Aorta (tissue), 5 donors: ENCODE measurements at regions of chr12 and their contacts with region 1.

Region 1: GRCh38 chr12:50314629-50315312 is 31.5 kb upstream of the LIMA1 start:
- DNase-seq: no peak
- ATAC-seq: no peak
- H3K4me3 ChIP-seq: no peak overlapping the region
- H3K27ac ChIP-seq: no peak overlapping the region
- H3K4me1 ChIP-seq: no peaks in the 10 kb centered on the region
- H3K27me3 ChIP-seq: no peaks in the 10 kb centered on the region

Region 2: DNA sequence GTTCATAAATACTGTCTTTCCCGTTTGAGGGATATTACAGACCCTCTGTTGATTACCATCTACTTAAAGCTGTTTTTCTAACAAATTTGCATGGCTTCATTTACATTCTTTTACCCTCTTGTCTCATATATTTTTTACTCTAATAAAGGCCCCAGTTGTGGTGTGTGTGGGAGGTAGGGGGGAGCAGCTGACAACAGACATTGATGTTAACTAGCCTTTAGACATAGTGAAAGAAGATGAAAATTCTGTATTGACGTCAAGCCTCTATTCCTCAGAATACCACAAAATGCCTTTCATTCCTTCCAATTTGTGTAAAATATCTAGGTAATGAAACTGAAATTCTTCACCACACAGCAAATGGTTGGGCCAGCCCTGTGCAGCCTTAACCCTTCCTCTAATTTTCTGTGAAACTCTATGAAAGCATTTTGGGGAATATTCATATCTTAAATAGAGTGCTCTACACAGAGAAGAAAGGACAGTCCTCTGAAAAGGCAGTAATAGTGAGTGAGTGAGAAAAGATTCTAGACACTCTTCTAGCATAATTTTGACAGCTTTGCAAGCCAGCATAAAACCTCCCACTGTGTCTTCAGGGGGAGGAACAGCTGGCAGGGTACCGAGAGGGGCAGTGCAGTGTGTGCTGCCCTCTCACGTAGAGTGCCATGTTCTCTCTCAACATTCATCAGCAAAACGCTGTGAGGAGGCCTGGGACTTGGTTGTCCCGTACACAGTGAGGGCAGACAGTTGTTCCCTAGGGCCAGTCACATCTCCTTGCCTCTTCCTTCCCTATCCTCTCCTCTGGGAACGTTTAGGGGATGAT is 127.5 kb before region 1 on chr12:
- intact Hi-C with region 1: loop called in 1 of 2 experiments (anchors 10 kb)
- DNase-seq: no peak
- ATAC-seq: peak; percentile 47
- H3K4me3 ChIP-seq: no peak overlapping the region
- H3K27ac ChIP-seq: peak overlapping the region; percentile 58 to 90
- H3K4me1 ChIP-seq: peaks cover 5 to 8% of the 10 kb centered on the region in 2 donors
- H3K27me3 ChIP-seq: no peaks in the 10 kb centered on the region

Region 3: GRCh38 chr12:50297027-50297426 is 17.7 kb before region 1 on chr12:
- intact Hi-C with region 1: no loop called
- DNase-seq: no peak
- ATAC-seq: no peak
- H3K4me3 ChIP-seq: no peak overlapping the region
- H3K27ac ChIP-seq: no peak overlapping the region
- H3K4me1 ChIP-seq: no peaks in the 10 kb centered on the region
- H3K27me3 ChIP-seq: no peaks in the 10 kb centered on the region